Activated naive CD4-positive, alpha-beta T cell treated with anti-CD3 and anti-CD28 coated beads for 36 hours (primary cell): ENCODE measurements at regions of chr1 and their contacts with region 1.

Region 1: DNA sequence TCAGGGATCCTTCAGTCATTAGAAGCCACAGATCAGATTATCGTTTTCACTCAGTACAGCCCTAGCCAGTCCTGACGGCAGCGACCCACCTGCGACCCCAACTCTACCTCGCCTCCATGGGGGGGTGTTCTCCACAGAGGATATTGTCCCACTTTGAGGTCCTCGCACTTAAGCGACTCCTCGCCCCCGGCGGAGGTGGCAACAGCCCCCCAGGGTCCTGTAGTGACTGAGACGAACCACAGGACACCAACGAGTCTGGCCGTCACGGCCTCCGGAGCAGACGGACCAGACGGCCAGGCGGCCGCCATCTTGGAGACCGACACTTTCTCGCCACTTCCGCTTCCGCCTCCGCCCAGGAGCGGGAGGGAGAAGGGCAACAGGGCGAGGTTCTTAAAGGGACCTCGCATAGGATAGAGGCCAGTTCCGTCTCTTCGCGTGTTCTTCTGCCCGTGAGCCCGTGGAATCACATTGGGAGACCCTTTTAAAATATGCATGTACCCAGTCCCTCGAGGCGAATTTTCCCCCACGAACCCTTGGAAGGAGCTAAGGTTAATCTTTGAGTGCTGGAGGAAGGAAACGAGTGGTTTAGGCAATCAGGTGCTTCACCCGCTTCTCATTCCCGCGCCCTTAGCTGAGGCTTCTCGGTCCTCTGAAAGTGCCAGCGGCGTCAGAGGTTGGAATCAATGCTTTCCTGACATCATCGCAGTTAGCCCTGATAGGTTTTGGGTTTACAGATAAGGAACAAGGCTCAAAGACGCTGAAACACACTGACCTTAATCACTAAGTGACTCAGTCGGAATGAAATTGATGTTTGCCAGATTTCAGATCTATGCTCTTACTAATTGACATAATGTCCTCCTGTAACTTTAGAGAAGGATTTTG is at the start of gene TM2D1:
- DNase-seq: peak; percentile 91
- H3K4me3 Mint-ChIP-seq: peak within 1 kb of the TSS; percentile 96
- H3K27ac Mint-ChIP-seq: peak within 1 kb of the TSS; percentile 99
- H3K4me1 Mint-ChIP-seq: peaks cover 20% of the 10 kb centered on the region
- H3K27me3 Mint-ChIP-seq: no peaks in the 10 kb centered on the region
- total RNA-seq, gene TM2D1: 28.2 to 30.9 TPM

Region 2: DNA sequence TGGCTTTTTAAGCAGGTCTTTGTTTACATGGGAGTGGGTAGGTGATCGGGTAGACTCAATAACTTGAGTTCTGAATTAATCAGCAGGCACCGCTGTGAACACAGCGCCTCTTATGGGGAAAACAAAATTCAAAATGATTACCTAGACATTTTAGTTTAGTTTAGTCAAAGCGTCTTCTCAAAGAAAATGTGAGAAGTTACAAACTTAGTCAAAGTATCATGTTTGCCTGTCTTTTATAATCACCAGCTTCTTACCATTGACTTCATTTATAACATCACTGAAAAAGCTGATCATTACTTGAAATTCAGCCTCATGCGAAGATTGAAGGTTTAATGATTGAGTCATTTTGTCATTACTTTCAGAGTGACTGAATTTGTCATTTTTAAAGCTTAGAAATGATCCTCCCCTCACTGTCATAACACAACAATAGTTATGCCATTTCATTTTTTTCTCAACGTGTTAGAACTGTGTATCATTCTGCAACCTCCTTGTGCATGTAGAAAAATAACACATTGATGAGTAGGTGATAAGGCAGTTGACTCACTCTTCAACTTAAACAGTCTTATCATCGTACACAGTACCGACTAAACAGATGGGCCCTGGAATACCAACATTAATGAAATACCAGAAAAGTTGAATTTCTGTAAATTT is 454.2 kb before region 1 on chr1:
- CTCF ChIA-PET with region 1: no interaction called
- intact Hi-C with region 1: loop called (anchors 1 kb)
- DNase-seq: peak; percentile 24
- H3K4me3 Mint-ChIP-seq: no peak overlapping the region
- H3K27ac Mint-ChIP-seq: peak overlapping the region; percentile 37
- H3K4me1 Mint-ChIP-seq: peaks cover 18% of the 10 kb centered on the region
- H3K27me3 Mint-ChIP-seq: peaks cover 7% of the 10 kb centered on the region

Region 3: GRCh38 chr1:61323681-61324328 is 401.2 kb before region 1 on chr1:
- CTCF ChIA-PET with region 1: no interaction called
- intact Hi-C with region 1: loop called (anchors 2 kb)
- DNase-seq: no peak
- H3K4me3 Mint-ChIP-seq: no peak overlapping the region
- H3K27ac Mint-ChIP-seq: no peak overlapping the region
- H3K4me1 Mint-ChIP-seq: peaks cover 27% of the 10 kb centered on the region
- H3K27me3 Mint-ChIP-seq: peaks cover 10% of the 10 kb centered on the region

Region 4: GRCh38 chr1:61741711-61742619 is 16.9 kb after region 1 on chr1 and contains the start of gene PATJ:
- CTCF ChIA-PET with region 1: interaction called, 4 read pairs
- intact Hi-C with region 1: loop called (anchors 1 kb)
- DNase-seq: peak; percentile 65
- H3K4me3 Mint-ChIP-seq: peak within 1 kb of the TSS; percentile 93
- H3K27ac Mint-ChIP-seq: peak within 1 kb of the TSS; percentile 83
- H3K4me1 Mint-ChIP-seq: peaks cover 20% of the 10 kb centered on the region
- H3K27me3 Mint-ChIP-seq: no peaks in the 10 kb centered on the region
- total RNA-seq, gene PATJ: 13.3 to 13.5 TPM

Region 5: GRCh38 chr1:61782771-61783170 is 57.7 kb after region 1 on chr1:
- CTCF ChIA-PET with region 1: no interaction called
- intact Hi-C with region 1: loop called (anchors 1 kb)
- DNase-seq: peak; percentile 82
- H3K4me3 Mint-ChIP-seq: no peak overlapping the region
- H3K27ac Mint-ChIP-seq: peak overlapping the region; percentile 39
- H3K4me1 Mint-ChIP-seq: peaks cover 39% of the 10 kb centered on the region
- H3K27me3 Mint-ChIP-seq: no peaks in the 10 kb centered on the region

Region 6: GRCh38 chr1:61825393-61825792 is 100.3 kb after region 1 on chr1:
- CTCF ChIA-PET with region 1: no interaction called
- intact Hi-C with region 1: no loop called
- DNase-seq: no peak
- H3K4me3 Mint-ChIP-seq: no peak overlapping the region
- H3K27ac Mint-ChIP-seq: no peak overlapping the region
- H3K4me1 Mint-ChIP-seq: no peaks in the 10 kb centered on the region
- H3K27me3 Mint-ChIP-seq: no peaks in the 10 kb centered on the region

Region 7: GRCh38 chr1:62783723-62784508 is 1058.9 kb after region 1 on chr1 and contains the start of gene ATG4C:
- CTCF ChIA-PET with region 1: no interaction called
- intact Hi-C with region 1: loop called (anchors 10 kb)
- DNase-seq: peak; percentile 96
- H3K4me3 Mint-ChIP-seq: no peak within 1 kb of the TSS
- H3K27ac Mint-ChIP-seq: no peak within 1 kb of the TSS
- H3K4me1 Mint-ChIP-seq: peaks cover 13% of the 10 kb centered on the region
- H3K27me3 Mint-ChIP-seq: peaks cover 7% of the 10 kb centered on the region
- total RNA-seq, gene ATG4C: 13.4 to 15.1 TPM